Activated CD8-positive, alpha-beta memory T cell treated with anti-CD3 and anti-CD28 coated beads, Interleukin-2, amount 10 ng/mL, durations not matched to agents 7 days and 5 days (primary cell): ENCODE measurements at regions of chr16 and their contacts with region 1.

Region 1: DNA sequence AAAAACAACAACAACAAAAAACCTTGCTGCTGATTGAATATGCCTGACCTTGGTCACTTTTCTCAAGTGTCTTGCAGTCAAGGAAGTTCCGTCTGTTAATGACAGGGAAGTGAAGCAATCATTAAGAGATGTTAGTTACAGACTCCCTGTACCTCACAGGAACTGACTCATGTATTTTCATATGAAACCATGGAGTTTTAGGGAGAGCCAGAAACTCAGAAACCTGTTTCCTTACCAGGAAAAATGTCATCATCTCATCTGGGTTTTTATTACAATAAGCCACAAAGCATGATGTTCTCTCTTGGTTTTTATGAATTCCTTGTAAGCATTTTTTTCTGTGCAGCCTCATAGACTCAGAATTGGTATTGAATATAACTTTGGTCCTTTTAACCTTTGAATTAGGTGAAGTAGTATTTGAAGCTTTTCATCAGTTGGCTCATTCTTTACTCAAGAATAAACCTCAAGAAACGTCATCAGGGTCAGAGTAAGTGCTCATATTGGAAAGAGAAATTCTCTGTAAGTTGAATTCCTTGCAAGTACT is 10.3 kb downstream of the LYRM1 start:
- DNase-seq: no peak
- ATAC-seq: peak; percentile 73
- H3K4me3 Mint-ChIP-seq: peak overlapping the region; percentile 45
- H3K27ac Mint-ChIP-seq: peak overlapping the region; percentile 82
- H3K4me1 Mint-ChIP-seq: peaks cover 70% of the 10 kb centered on the region
- H3K27me3 Mint-ChIP-seq: no peaks in the 10 kb centered on the region

Region 2: GRCh38 chr16:20838240-20838639 is 72.6 kb before region 1 on chr16:
- CTCF ChIA-PET with region 1: no interaction called
- DNase-seq: no peak
- ATAC-seq: no peak
- H3K4me3 Mint-ChIP-seq: no peak overlapping the region
- H3K27ac Mint-ChIP-seq: no peak overlapping the region
- H3K4me1 Mint-ChIP-seq: peaks cover 4% of the 10 kb centered on the region
- H3K27me3 Mint-ChIP-seq: no peaks in the 10 kb centered on the region

Region 3: GRCh38 chr16:20900299-20901067 is 10.4 kb before region 1 on chr16 and contains the starts of genes DCUN1D3 and LYRM1:
- CTCF ChIA-PET with region 1: interaction called, 10 read pairs
- DNase-seq: peak; percentile 95
- ATAC-seq: peak; percentile 78
- H3K4me3 Mint-ChIP-seq: peak within 1 kb of the TSS; percentile 97
- H3K27ac Mint-ChIP-seq: peak within 1 kb of the TSS; percentile 99
- H3K4me1 Mint-ChIP-seq: peaks cover 75% of the 10 kb centered on the region
- H3K27me3 Mint-ChIP-seq: no peaks in the 10 kb centered on the region
- total RNA-seq, gene DCUN1D3: 18.1 to 24.4 TPM
- total RNA-seq, gene LYRM1: 38.6 to 47.7 TPM